Activated CD4-positive, alpha-beta T cell treated with anti-CD3 and anti-CD28 coated beads, Interleukin-2, amount 10 ng/mL, durations not matched to agents 24 days and 14 days (primary cell): ENCODE measurements at regions of chr9 and their contacts with region 1.

Region 1: GRCh38 chr9:90914868-90915483 is 113.4 kb downstream of the SYK start:
- DNase-seq: peak; percentile 91
- H3K4me3 Mint-ChIP-seq: no peak overlapping the region
- H3K27ac Mint-ChIP-seq: peak overlapping the region; percentile 73
- H3K4me1 Mint-ChIP-seq: peaks cover 6% of the 10 kb centered on the region
- H3K27me3 Mint-ChIP-seq: no peaks in the 10 kb centered on the region

Region 2: DNA sequence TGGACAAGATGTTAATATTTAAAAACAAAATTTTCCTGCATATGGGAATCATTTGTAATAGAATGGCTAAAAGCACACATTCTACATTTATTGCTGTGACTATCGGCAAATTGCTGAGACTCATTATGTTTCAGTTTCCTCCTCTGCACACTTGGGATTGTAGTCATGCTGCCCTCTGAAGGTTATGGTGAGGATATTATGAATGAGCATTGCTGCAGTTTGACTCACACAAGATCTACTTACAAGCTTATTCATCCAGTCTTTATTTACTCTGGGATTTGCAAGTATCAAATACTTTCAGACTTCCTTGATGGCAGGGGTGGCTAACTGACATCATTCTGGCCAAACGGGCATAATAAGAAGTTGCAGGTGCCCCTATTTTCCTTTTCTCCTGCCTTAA is 518.2 kb after region 1 on chr9:
- intact Hi-C with region 1: loop called (anchors 1 kb)
- DNase-seq: peak; percentile 75
- H3K4me3 Mint-ChIP-seq: no peak overlapping the region
- H3K27ac Mint-ChIP-seq: no peak overlapping the region
- H3K4me1 Mint-ChIP-seq: peaks cover 20% of the 10 kb centered on the region
- H3K27me3 Mint-ChIP-seq: peaks cover 18% of the 10 kb centered on the region

Region 3: GRCh38 chr9:91681461-91682305 is 766.7 kb after region 1 on chr9:
- intact Hi-C with region 1: loop called (anchors 1 kb)
- DNase-seq: peak; percentile 92
- H3K4me3 Mint-ChIP-seq: peak overlapping the region; percentile 69
- H3K27ac Mint-ChIP-seq: no peak overlapping the region
- H3K4me1 Mint-ChIP-seq: peaks cover 5% of the 10 kb centered on the region
- H3K27me3 Mint-ChIP-seq: peaks cover 34% of the 10 kb centered on the region

Region 4: GRCh38 chr9:91727316-91727861 is 812.4 kb after region 1 on chr9:
- intact Hi-C with region 1: loop called (anchors 2 kb)
- DNase-seq: peak; percentile 80
- H3K4me3 Mint-ChIP-seq: no peak overlapping the region
- H3K27ac Mint-ChIP-seq: no peak overlapping the region
- H3K4me1 Mint-ChIP-seq: no peaks in the 10 kb centered on the region
- H3K27me3 Mint-ChIP-seq: peaks cover 2% of the 10 kb centered on the region